CD8-positive, alpha-beta memory T cell (primary cell): ENCODE measurements at regions of chr14 and their contacts with region 1.

Region 1: DNA sequence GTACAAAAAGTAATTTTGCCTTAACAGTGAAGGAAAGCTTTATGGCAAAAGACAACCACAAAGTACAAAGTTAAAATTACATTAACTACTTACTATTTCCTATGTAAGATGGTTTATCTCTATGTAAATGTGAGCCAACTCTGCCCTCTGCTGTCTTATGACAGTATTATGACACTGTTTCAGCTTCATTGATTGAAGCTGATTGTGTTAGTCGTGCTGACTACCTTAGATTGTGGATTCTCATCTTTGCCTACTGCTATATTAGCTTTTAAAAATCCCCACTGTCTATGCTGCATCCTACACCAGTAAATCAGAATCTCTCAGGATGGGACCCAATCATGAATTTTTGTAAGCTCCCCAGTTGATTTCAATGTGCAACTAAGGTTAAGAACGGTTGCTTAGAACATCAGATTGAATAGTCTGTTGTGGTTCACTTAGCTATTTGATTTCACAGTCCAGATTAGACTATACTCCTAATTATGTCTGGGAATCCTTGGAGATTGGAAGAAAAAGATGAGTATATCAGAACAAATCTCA is 12.2 kb upstream of the SPTB start:
- DNase-seq: peak in 3 of 5 donors; percentile 8 to 53 (median 32)
- H3K4me3 ChIP-seq: no peak overlapping the region
- H3K4me3 Mint-ChIP-seq: no peak overlapping the region
- H3K27ac ChIP-seq: no peak overlapping the region
- H3K27ac Mint-ChIP-seq: no peak overlapping the region
- H3K4me1 ChIP-seq: no peaks in the 10 kb centered on the region
- H3K4me1 Mint-ChIP-seq: no peaks in the 10 kb centered on the region
- H3K27me3 ChIP-seq: no peaks in the 10 kb centered on the region
- H3K27me3 Mint-ChIP-seq: peaks cover 11 to 22% of the 10 kb centered on the region in 2 donors

Region 2: DNA sequence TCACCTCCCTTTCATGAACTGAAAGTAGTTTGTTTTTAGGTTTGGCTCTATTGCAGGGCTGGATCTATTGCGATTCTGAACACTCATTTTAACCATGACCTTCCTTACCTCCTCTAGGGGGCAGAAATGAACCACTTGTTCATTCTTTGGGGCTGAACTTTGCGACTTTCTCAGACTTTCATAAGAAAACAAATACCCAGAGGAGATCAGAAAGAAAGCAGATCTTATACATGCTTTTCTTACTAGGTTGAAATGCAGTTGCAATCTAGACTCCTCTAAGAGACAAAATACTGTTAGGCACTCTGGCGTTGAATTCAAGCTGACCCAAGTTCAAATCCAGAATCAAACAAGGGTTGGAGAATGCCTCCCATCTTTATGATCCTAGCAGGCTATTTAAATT is 220.3 kb before region 1 on chr14:
- CTCF ChIA-PET with region 1: interaction called, 21 read pairs
- POLR2A ChIA-PET with region 1: no interaction called
- DNase-seq: peak in 2 of 5 donors; percentile 21 to 58
- H3K4me3 ChIP-seq: no peak overlapping the region
- H3K4me3 Mint-ChIP-seq: no peak overlapping the region
- H3K27ac ChIP-seq: no peak overlapping the region
- H3K27ac Mint-ChIP-seq: peak overlapping the region in 4 of 8 donors; percentile 9 to 54 (median 38)
- H3K4me1 ChIP-seq: peaks cover 14% of the 10 kb centered on the region
- H3K4me1 Mint-ChIP-seq: peaks cover 22 to 39% (median 33%) of the 10 kb centered on the region in 3 donors
- H3K27me3 ChIP-seq: no peaks in the 10 kb centered on the region
- H3K27me3 Mint-ChIP-seq: peaks cover 0 to 3% of the 10 kb centered on the region in 2 donors

Region 3: GRCh38 chr14:64823305-64823861 is 68.5 kb before region 1 on chr14:
- CTCF ChIA-PET with region 1: interaction called, 95 read pairs
- POLR2A ChIA-PET with region 1: interaction called, 5 read pairs
- DNase-seq: peak; percentile 45 to 74 (median 51)
- H3K4me3 ChIP-seq: no peak overlapping the region
- H3K4me3 Mint-ChIP-seq: peak overlapping the region in 2 of 7 donors; percentile 11 to 53
- H3K27ac ChIP-seq: no peak overlapping the region
- H3K27ac Mint-ChIP-seq: peak overlapping the region in 1 of 8 donors; percentile 38
- H3K4me1 ChIP-seq: peaks cover 7% of the 10 kb centered on the region
- H3K4me1 Mint-ChIP-seq: peaks cover 5 to 9% (median 6%) of the 10 kb centered on the region in 3 donors
- H3K27me3 ChIP-seq: peaks cover 4% of the 10 kb centered on the region
- H3K27me3 Mint-ChIP-seq: peaks cover 6 to 59% of the 10 kb centered on the region in 2 donors

Region 4: DNA sequence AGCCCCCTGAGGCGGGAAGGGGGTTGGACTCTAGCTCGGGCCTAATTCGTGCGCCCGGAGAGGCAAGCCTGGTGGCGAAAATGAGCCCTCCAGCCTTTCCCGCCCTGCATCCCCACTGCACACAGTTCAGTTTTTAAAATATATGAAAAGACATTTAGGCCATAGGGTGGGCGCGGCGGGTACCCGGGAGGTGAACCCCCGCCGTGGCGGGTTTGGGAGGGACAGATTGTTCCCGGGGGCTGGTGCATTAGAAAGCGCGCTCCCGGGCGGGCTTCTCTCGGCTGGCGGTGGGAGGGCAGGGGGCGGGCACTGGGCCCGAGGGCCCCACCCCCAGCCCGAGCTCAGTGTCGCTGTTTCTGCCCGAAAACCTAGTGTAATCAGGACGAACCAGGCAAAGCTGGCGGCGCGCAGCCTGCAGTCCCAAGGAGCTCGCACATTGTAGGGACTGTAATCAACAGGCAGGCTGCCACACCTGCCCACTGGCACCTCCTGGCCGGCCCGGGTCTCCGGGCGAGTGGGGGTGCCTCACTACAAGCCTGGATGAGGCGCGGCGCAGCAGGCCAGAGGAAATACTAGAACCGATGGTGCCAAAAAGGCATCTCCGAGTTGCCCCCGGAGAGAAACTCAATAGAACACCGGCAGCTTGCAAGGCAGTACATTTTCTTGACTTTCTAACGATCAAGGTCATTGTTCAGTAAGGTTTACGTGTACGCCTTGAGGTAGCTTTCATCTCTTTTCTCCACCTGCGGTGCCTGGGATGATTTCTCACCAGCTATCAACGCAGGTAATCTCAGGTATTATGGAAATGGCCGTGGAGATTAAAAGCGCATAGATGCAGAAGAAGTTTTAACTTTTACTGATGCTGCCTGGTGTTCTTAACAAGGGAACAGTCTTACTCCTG is 11.4 kb before region 1 on chr14:
- CTCF ChIA-PET with region 1: interaction called, 33 read pairs
- POLR2A ChIA-PET with region 1: interaction called, 4 read pairs
- DNase-seq: peak; percentile 33 to 58 (median 44)
- H3K4me3 ChIP-seq: peak overlapping the region; percentile 54
- H3K4me3 Mint-ChIP-seq: peak overlapping the region; percentile 71 to 92 (median 86)
- H3K27ac ChIP-seq: no peak overlapping the region
- H3K27ac Mint-ChIP-seq: peak overlapping the region in 1 of 8 donors; percentile 43
- H3K4me1 ChIP-seq: peaks cover 6% of the 10 kb centered on the region
- H3K4me1 Mint-ChIP-seq: peaks cover 8 to 13% (median 9%) of the 10 kb centered on the region in 3 donors
- H3K27me3 ChIP-seq: peaks cover 10% of the 10 kb centered on the region
- H3K27me3 Mint-ChIP-seq: peaks cover 35 to 63% of the 10 kb centered on the region in 2 donors

Region 5: GRCh38 chr14:64906022-64906421 is 14.1 kb after region 1 on chr14:
- CTCF ChIA-PET with region 1: interaction called, 19 read pairs
- POLR2A ChIA-PET with region 1: interaction called, 5 read pairs
- DNase-seq: no peak
- H3K4me3 ChIP-seq: no peak overlapping the region
- H3K4me3 Mint-ChIP-seq: no peak overlapping the region
- H3K27ac ChIP-seq: no peak overlapping the region
- H3K27ac Mint-ChIP-seq: no peak overlapping the region
- H3K4me1 ChIP-seq: no peaks in the 10 kb centered on the region
- H3K4me1 Mint-ChIP-seq: no peaks in the 10 kb centered on the region
- H3K27me3 ChIP-seq: no peaks in the 10 kb centered on the region
- H3K27me3 Mint-ChIP-seq: peaks cover 5 to 55% of the 10 kb centered on the region in 2 donors

Region 6: GRCh38 chr14:64914237-64914971 is 22.5 kb after region 1 on chr14 and contains the start of gene CHURC1:
- CTCF ChIA-PET with region 1: interaction called, 10 read pairs
- POLR2A ChIA-PET with region 1: no interaction called
- DNase-seq: peak; percentile 93 to 99 (median 97)
- H3K4me3 ChIP-seq: peak within 1 kb of the TSS; percentile 90
- H3K4me3 Mint-ChIP-seq: peak within 1 kb of the TSS; percentile 86 to 96 (median 91)
- H3K27ac ChIP-seq: peak within 1 kb of the TSS; percentile 98
- H3K27ac Mint-ChIP-seq: peak within 1 kb of the TSS; percentile 92 to 100 (median 97)
- H3K4me1 ChIP-seq: peaks cover 46% of the 10 kb centered on the region
- H3K4me1 Mint-ChIP-seq: peaks cover 48 to 51% (median 50%) of the 10 kb centered on the region in 3 donors
- H3K27me3 ChIP-seq: no peaks in the 10 kb centered on the region
- H3K27me3 Mint-ChIP-seq: peaks cover 2 to 12% of the 10 kb centered on the region in 2 donors
- total RNA-seq, gene CHURC1: 44.0 to 54.8 TPM

Region 7: GRCh38 chr14:64928239-64929013 is 36.5 kb after region 1 on chr14:
- CTCF ChIA-PET with region 1: interaction called, 12 read pairs
- POLR2A ChIA-PET with region 1: no interaction called
- DNase-seq: peak in 2 of 5 donors; percentile 46 to 61
- H3K4me3 ChIP-seq: peak overlapping the region; percentile 33
- H3K4me3 Mint-ChIP-seq: no peak overlapping the region
- H3K27ac ChIP-seq: peak overlapping the region; percentile 13
- H3K27ac Mint-ChIP-seq: no peak overlapping the region
- H3K4me1 ChIP-seq: peaks cover 80% of the 10 kb centered on the region
- H3K4me1 Mint-ChIP-seq: peaks cover 25 to 32% (median 30%) of the 10 kb centered on the region in 3 donors
- H3K27me3 ChIP-seq: no peaks in the 10 kb centered on the region
- H3K27me3 Mint-ChIP-seq: no peaks in the 10 kb centered on the region